CD8-positive, alpha-beta T cell (primary cell): ENCODE measurements at regions of chr11 and their contacts with region 1.

Region 1: DNA sequence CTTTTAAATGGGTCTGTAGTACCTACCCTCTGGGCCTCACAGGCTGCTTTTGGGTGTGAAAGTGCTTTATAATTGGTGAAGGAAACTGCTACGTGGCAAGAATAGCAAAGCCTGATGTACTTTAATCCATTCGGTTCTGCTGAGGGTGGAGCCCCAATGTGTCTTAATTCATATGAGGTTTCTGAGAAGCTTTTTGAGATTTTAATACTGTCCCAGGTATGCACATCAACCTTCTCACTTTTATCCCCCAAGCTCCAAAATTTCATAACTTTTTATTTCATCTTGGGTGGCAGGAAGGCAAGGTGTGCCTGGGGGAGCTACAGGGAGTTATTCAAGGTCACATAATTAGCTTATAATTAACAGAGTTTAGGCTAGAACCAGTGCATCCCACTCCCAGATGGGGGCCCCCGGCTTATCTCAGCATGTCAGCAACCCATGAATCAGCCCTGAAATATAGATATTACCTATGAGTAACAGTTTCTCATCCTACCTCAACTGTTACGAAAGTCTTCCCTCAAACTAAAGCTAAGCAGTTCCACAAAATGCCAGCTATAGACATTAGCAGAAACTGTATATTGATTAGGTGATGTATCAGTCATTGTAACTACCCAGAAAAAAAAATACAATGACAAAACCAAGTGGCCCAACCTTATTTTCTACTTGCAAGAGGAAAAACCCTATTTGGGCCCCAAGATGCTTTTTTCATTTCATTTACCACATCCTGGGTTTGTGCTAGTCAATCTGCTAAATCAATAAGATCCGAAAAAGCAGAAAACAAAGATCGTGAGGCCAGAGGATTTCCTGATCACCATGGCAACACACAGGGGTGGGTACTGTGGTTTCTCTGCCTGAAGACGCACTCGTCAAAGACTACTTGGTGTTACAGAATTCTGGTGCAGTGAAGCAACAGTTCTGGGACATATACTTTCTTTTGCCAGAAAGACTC is 26.7 kb downstream of the CD44 start:
- DNase-seq: peak; percentile 69 to 99 (median 87)
- ATAC-seq: peak; percentile 66
- H3K4me3 ChIP-seq: peak overlapping the region; percentile 31 to 34
- H3K4me3 Mint-ChIP-seq: peak overlapping the region; percentile 74
- H3K27ac ChIP-seq: peak overlapping the region; percentile 96 to 97
- H3K27ac Mint-ChIP-seq: peak overlapping the region; percentile 100
- H3K4me1 ChIP-seq: peaks cover 97% of the 10 kb centered on the region
- H3K4me1 Mint-ChIP-seq: peaks cover 100% of the 10 kb centered on the region
- H3K27me3 ChIP-seq: no peaks in the 10 kb centered on the region
- H3K27me3 Mint-ChIP-seq: no peaks in the 10 kb centered on the region
- CTCF ChIP-seq: no peak

Region 2: DNA sequence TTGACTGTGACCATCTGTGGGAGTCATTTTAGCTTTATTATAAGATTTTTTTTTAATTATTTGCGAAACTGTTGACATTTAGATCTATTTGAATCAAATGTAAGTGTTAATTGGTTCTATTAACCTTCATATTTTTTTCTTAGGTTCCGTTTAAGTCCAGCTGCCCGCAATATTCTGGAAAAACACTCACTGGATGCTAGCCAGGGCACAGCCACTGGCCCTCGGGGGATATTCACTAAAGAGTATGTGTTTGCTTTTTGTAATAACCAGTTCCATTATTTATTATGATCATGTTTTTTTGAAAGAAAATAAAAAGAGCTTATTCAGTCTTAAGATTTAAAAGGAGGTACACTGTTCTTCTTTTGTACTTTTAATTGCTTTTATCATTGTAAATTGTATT is 205.4 kb before region 1 on chr11:
- CTCF ChIA-PET with region 1: no interaction called
- POLR2A ChIA-PET with region 1: no interaction called
- intact Hi-C with region 1: no loop called
- DNase-seq: no peak
- ATAC-seq: no peak
- H3K4me3 ChIP-seq: no peak overlapping the region
- H3K4me3 Mint-ChIP-seq: no peak overlapping the region
- H3K27ac ChIP-seq: no peak overlapping the region
- H3K27ac Mint-ChIP-seq: no peak overlapping the region
- H3K4me1 ChIP-seq: no peaks in the 10 kb centered on the region
- H3K4me1 Mint-ChIP-seq: no peaks in the 10 kb centered on the region
- H3K27me3 ChIP-seq: no peaks in the 10 kb centered on the region
- H3K27me3 Mint-ChIP-seq: no peaks in the 10 kb centered on the region
- CTCF ChIP-seq: no peak

Region 3: DNA sequence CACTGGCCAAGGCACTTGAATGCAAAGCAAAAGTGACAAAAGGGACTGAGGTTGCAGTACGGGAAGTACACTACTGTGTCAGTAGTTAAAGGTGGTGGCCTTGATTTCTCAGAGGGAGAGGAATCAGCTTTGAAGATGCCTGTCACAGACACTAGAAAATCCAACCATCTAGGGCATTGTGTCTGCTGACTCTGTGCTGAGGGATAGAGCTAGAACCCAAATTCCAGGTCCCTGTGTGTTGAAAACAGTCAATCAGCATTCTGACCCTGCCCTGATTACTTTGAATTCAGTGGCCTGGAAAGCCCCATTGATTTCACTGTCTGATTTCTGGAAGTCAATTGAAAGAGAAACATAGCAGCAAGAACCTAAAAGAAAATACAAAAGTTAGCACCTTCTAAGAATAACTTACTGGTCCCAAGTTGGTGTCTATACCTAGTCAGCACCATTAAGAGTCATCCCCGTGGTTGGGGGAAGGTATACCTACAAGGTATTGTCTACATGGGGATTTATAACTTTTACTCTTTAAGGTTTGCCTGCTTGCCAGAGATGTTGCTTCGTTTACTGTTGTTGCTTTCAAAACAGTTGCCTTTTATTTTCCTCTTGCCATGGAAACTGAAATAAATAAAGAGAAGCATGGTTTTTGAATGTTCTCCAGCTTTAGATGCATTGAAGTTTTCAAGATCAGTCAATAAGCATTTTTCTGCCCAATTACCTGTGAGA is 152.0 kb before region 1 on chr11:
- CTCF ChIA-PET with region 1: interaction called, 10 read pairs
- POLR2A ChIA-PET with region 1: no interaction called
- intact Hi-C with region 1: no loop called
- DNase-seq: peak in 5 of 9 experiments; percentile 5 to 76 (median 43)
- ATAC-seq: peak; percentile 74
- H3K4me3 ChIP-seq: no peak overlapping the region
- H3K4me3 Mint-ChIP-seq: peak overlapping the region; percentile 24
- H3K27ac ChIP-seq: peak overlapping the region in 1 of 2 experiments; percentile 25
- H3K27ac Mint-ChIP-seq: peak overlapping the region; percentile 87
- H3K4me1 ChIP-seq: peaks cover 21% of the 10 kb centered on the region
- H3K4me1 Mint-ChIP-seq: peaks cover 24% of the 10 kb centered on the region
- H3K27me3 ChIP-seq: no peaks in the 10 kb centered on the region
- H3K27me3 Mint-ChIP-seq: no peaks in the 10 kb centered on the region
- CTCF ChIP-seq: no peak

Region 4: GRCh38 chr11:35082321-35083182 is 83.1 kb before region 1 on chr11:
- CTCF ChIA-PET with region 1: no interaction called
- POLR2A ChIA-PET with region 1: interaction called, 3 read pairs
- intact Hi-C with region 1: loop called (anchors 1 to 5 kb)
- DNase-seq: peak; percentile 70 to 95 (median 84)
- ATAC-seq: peak; percentile 79
- H3K4me3 ChIP-seq: peak overlapping the region; percentile 12 to 40
- H3K4me3 Mint-ChIP-seq: peak overlapping the region; percentile 73
- H3K27ac ChIP-seq: peak overlapping the region; percentile 73 to 86
- H3K27ac Mint-ChIP-seq: peak overlapping the region; percentile 98
- H3K4me1 ChIP-seq: peaks cover 69% of the 10 kb centered on the region
- H3K4me1 Mint-ChIP-seq: peaks cover 83% of the 10 kb centered on the region
- H3K27me3 ChIP-seq: no peaks in the 10 kb centered on the region
- H3K27me3 Mint-ChIP-seq: no peaks in the 10 kb centered on the region
- CTCF ChIP-seq: no peak

Region 5: GRCh38 chr11:35151241-35151640 is 14.5 kb before region 1 on chr11:
- CTCF ChIA-PET with region 1: interaction called, 92 read pairs
- POLR2A ChIA-PET with region 1: interaction called, 31 read pairs
- intact Hi-C with region 1: loop called in 1 of 2 experiments (anchors 1 kb)
- DNase-seq: peak in 1 of 9 experiments; percentile 34
- ATAC-seq: no peak
- H3K4me3 ChIP-seq: no peak overlapping the region
- H3K4me3 Mint-ChIP-seq: peak overlapping the region; percentile 48
- H3K27ac ChIP-seq: peak overlapping the region in 1 of 2 experiments; percentile 52
- H3K27ac Mint-ChIP-seq: peak overlapping the region; percentile 87
- H3K4me1 ChIP-seq: peaks cover 100% of the 10 kb centered on the region
- H3K4me1 Mint-ChIP-seq: peaks cover 96% of the 10 kb centered on the region
- H3K27me3 ChIP-seq: no peaks in the 10 kb centered on the region
- H3K27me3 Mint-ChIP-seq: no peaks in the 10 kb centered on the region
- CTCF ChIP-seq: no peak

Region 6: DNA sequence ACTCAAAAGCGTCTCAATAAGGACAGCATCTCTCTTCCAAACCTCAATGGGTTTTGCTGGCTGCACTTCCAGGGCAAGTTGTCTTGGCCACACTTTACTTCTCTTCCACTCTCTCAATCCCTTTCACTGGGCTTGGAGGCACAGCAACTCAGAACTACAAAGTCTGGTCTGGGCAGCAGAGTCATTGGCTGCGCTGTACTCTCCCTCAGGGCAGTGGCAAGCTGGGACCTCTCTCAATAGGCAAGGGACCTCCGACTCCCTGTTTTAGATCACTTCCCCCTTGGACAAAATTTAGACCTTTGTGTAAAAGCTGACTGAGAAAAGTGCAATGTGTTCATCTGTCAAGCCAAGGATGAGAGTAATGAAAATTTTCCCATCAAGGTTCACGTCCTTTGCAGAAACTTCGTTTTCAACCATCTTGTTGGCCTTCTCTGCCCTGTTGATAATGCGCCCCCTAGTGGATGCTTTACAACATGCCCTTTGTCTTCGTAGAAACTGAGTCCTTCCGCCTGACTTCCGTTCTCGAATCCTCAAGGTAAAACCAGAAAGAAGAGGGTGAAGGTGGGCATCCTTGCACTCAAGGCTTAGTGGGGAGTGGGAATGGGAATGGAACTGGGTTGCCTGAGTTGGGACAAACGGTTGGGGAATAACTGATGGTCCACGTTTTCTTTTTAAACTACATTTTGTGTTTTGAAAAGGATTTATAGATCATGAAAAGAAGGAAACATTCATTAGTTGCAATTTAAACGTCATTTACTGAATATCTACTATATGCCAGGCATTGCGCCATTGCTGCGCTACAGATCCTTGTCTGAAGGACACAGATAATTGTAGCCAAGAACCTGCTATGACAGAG is 72.4 kb after region 1 on chr11:
- CTCF ChIA-PET with region 1: interaction called, 9 read pairs
- POLR2A ChIA-PET with region 1: interaction called, 4 read pairs
- intact Hi-C with region 1: loop called (anchors 5 kb)
- DNase-seq: peak in 7 of 9 experiments; percentile 29 to 84 (median 62)
- ATAC-seq: no peak
- H3K4me3 ChIP-seq: no peak overlapping the region
- H3K4me3 Mint-ChIP-seq: no peak overlapping the region
- H3K27ac ChIP-seq: no peak overlapping the region
- H3K27ac Mint-ChIP-seq: no peak overlapping the region
- H3K4me1 ChIP-seq: peaks cover 46% of the 10 kb centered on the region
- H3K4me1 Mint-ChIP-seq: peaks cover 87% of the 10 kb centered on the region
- H3K27me3 ChIP-seq: no peaks in the 10 kb centered on the region
- H3K27me3 Mint-ChIP-seq: no peaks in the 10 kb centered on the region
- CTCF ChIP-seq: peak; percentile 65